IMR-90 (cell line): ENCODE measurements at regions of chr6 and their contacts with region 1.

Region 1: DNA sequence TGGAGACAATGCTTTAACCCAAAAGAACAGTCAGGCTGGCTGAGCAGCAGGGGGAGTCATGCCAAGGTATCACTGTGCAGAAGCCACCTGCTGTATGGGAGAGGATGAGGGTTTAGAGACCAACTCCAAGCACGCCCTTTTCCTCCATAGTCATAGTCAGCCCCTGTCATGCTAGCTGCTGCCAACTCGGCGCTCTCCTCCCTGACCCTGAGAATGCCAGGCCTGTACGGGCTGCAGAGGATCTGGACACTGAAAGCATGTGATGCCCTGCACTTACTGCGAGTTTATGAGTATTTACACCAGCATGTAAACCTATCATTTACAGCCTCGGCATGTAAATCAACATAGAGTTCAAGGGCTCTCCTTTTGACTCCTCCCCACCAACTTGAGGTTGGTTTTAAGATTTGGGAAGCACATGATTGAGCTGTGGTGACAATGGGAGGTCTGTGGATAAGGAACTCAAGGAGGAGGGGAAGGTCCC is 11.7 kb upstream of the SCUBE3 start:
- DNase-seq: no peak
- ATAC-seq: peak; percentile 16; the same call in 1 of the 2 replicates
- H3K4me3 ChIP-seq: no peak overlapping the region
- H3K27ac ChIP-seq: no peak overlapping the region
- H3K4me1 ChIP-seq: peaks cover 7% of the 10 kb centered on the region
- H3K27me3 ChIP-seq: peaks cover 2% of the 10 kb centered on the region; the same call in 1 of the 2 replicates
- CTCF ChIP-seq: no peak
- POLR2A ChIP-seq: no peak
- RAD21 ChIP-seq: no peak

Region 2: DNA sequence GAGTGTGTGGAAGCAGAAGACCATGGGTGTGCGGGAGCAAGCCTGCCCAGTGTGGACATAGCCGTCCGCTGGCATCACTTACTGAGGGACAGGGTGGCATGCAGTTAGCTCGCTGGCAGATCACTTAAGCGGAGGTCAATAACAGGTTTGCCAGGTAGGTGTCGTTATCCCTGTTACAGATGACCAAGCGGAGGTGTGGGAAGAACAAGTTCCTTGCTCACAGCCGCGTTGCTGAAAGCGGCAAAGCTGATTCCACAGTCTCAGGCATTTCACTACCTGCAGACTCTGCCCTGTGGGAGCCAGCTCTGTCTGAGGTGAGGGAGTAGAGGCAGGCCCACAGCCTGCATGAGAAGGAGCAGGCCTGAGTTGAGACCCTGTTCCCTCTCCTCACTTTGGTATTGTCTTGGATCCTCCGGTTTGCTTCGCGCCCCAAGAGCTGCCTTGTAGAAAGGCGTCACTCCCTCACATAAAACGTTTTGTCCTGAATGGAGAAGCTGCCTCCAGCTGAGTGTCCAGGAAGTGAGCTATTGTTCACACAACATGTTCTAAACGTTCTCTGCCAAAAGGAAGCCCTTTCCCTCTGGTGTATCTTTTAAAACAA is 157.9 kb before region 1 on chr6:
- CTCF ChIA-PET with region 1: no interaction called
- POLR2A ChIA-PET with region 1: no interaction called
- dilution Hi-C with region 1: no loop called
- in situ Hi-C with region 1: no loop called
- intact Hi-C with region 1: no loop called
- DNase-seq: no peak
- ATAC-seq: no peak
- H3K4me3 ChIP-seq: no peak overlapping the region
- H3K27ac ChIP-seq: no peak overlapping the region
- H3K4me1 ChIP-seq: peaks cover 29% of the 10 kb centered on the region
- H3K27me3 ChIP-seq: no peaks in the 10 kb centered on the region
- CTCF ChIP-seq: no peak
- POLR2A ChIP-seq: no peak
- RAD21 ChIP-seq: no peak

Region 3: DNA sequence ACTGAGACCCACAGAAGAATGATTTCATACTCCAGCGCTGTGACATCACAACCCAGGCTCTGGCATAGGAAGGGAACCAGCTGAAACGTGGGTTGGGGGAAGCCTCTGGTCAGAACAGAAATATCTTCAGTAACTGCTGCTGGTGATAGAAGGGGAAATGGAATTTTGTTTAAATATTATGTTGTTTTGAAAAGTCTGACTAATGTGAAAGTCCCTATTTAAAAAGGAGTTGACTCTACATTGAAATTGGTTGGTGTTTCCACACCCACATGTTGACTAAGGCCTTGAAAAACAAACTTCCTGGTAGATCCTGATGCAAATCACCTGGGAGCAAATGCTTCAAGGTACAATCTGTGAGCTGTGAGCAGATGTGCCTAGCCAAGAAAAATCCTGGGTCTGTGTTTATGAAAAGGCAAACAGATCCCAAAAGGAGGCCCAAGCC is 36.5 kb before region 1 on chr6:
- CTCF ChIA-PET with region 1: no interaction called
- POLR2A ChIA-PET with region 1: no interaction called
- dilution Hi-C with region 1: no loop called
- in situ Hi-C with region 1: no loop called
- intact Hi-C with region 1: loop called (anchors 5 kb)
- DNase-seq: peak; percentile 87
- ATAC-seq: peak; percentile 74
- H3K4me3 ChIP-seq: no peak overlapping the region
- H3K27ac ChIP-seq: peak overlapping the region; percentile 16
- H3K4me1 ChIP-seq: peaks cover 23% of the 10 kb centered on the region
- H3K27me3 ChIP-seq: no peaks in the 10 kb centered on the region; the same call in 1 of the 2 replicates
- CTCF ChIP-seq: no peak
- POLR2A ChIP-seq: no peak
- RAD21 ChIP-seq: no peak; the same call in 1 of the 2 replicates

Region 4: DNA sequence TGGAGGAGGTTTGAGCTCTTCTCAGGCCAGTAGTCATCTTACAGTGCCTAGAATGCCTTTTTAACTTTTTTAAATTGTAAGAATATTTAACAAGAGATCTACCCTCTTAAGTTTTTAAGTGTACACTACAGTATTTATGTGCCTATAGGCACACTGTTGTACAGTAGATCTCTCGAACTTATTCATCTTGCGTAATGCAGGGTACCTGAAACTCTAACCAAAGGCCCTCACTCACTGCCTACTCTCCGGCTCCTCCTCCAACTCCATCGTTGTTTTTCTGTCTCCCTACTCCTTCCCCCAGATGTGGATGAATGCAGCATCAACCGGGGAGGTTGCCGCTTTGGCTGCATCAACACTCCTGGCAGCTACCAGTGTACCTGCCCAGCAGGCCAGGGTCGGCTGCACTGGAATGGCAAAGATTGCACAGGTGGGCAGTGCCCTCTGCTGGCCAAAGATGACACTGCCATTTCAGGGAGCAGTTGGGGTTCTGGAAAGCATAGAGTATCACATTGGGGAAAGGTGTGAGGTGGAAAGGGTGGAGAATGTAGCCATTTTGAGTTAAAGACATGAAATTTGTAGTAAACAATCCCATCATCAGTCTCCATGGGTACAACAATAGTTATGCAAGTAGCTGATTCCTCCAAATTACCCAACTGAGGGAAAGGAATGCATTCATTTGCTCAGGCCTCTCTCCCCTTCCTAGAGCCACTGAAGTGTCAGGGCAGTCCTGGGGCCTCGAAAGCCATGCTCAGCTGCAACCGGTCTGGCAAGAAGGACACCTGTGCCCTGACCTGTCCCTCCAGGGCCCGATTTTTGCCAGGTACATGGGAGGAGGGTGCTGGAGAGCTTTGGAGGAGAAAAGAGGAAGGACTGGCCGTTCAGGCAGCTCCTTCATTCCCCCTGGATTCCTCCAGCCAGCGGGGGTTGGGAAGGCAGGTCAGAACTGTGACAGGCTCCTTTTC is 39.0 kb after region 1 on chr6:
- CTCF ChIA-PET with region 1: interaction called, 12 read pairs
- POLR2A ChIA-PET with region 1: no interaction called
- dilution Hi-C with region 1: no loop called
- in situ Hi-C with region 1: no loop called
- intact Hi-C with region 1: no loop called
- DNase-seq: peak; percentile 44
- ATAC-seq: peak; percentile 87
- H3K4me3 ChIP-seq: no peak overlapping the region
- H3K27ac ChIP-seq: no peak overlapping the region
- H3K4me1 ChIP-seq: peaks cover 5% of the 10 kb centered on the region; the same call in 1 of the 2 replicates
- H3K27me3 ChIP-seq: no peaks in the 10 kb centered on the region
- CTCF ChIP-seq: peak; percentile 94
- POLR2A ChIP-seq: no peak
- RAD21 ChIP-seq: peak; percentile 96

Region 5: GRCh38 chr6:35435074-35435837 is 233.2 kb after region 1 on chr6:
- CTCF ChIA-PET with region 1: no interaction called
- POLR2A ChIA-PET with region 1: no interaction called
- dilution Hi-C with region 1: no loop called
- in situ Hi-C with region 1: no loop called
- intact Hi-C with region 1: no loop called
- DNase-seq: no peak
- ATAC-seq: no peak
- H3K4me3 ChIP-seq: no peak overlapping the region
- H3K27ac ChIP-seq: no peak overlapping the region
- H3K4me1 ChIP-seq: peaks cover 3% of the 10 kb centered on the region; the same call in 1 of the 2 replicates
- H3K27me3 ChIP-seq: no peaks in the 10 kb centered on the region
- CTCF ChIP-seq: no peak
- POLR2A ChIP-seq: no peak
- RAD21 ChIP-seq: no peak